GM12878 (cell line): ENCODE measurements at regions of chr15 and their contacts with region 1.

Region 1: GRCh38 chr15:65275728-65276126 is 11.0 kb downstream of the PARP16 start:
- DNase-seq: no peak
- ATAC-seq: no peak
- H3K4me3 ChIP-seq: no peak overlapping the region
- H3K27ac ChIP-seq: no peak overlapping the region
- H3K4me1 ChIP-seq: no peaks in the 10 kb centered on the region
- H3K27me3 ChIP-seq: no peaks in the 10 kb centered on the region
- CTCF ChIP-seq: no peak
- EP300 ChIP-seq: no peak
- POLR2A ChIP-seq: no peak
- RAD21 ChIP-seq: no peak

Region 2: DNA sequence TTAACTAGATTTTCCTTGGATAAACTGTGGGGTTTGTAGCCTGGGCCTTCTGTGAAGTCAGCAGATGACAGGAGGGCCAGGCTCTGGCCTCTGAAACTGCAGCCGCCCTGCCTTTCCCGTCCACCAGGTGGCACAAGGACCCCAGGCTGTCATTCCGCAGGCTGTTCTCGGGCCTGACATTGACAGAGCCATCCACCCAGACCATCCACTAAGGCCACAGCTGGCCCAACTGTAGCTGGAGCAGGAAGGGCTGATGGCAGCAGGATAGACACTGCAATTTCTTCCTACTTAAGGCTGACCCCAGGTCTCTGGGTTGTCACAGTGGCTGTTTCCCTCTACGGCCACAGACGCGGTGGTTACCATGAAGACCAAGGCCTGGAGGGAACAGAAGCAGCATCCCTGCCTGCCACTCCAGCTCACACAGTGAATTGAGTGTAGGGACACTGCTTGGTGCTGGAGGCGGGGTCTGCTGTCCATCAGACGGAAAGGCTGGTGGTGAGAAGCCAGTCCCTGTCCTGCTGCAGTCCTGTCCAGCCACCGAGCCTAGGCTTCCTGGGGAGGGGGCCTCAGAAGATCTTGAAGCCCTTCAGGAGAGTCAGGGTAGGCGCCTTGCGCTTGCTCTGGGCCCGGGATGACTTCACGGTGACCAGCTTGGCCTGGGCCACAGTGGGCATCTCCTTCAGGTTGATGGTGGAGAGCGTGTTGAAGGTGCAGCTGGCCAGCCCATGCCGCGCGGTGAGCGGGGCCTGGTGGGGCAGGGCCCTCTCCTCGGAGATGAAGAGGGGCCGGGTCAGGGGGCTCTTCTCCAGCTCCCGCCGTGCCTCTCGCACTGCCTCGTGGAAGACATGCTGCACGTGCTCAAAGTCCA is 221.2 kb before region 1 on chr15:
- CTCF ChIA-PET with region 1: interaction called, 9 read pairs
- POLR2A ChIA-PET with region 1: no interaction called
- RAD21 ChIA-PET with region 1: interaction called, 4 read pairs
- SMC1A ChIA-PET with region 1: interaction called, 4 read pairs
- in situ Hi-C with region 1: no loop called
- intact Hi-C with region 1: loop called (anchors 1 kb)
- DNase-seq: no peak
- ATAC-seq: peak; percentile 82
- H3K4me3 ChIP-seq: no peak overlapping the region
- H3K27ac ChIP-seq: no peak overlapping the region
- H3K4me1 ChIP-seq: peaks cover 6% of the 10 kb centered on the region
- H3K27me3 ChIP-seq: no peaks in the 10 kb centered on the region
- CTCF ChIP-seq: peak; percentile 89 to 93 (median 89)
- EP300 ChIP-seq: no peak
- POLR2A ChIP-seq: no peak
- RAD21 ChIP-seq: peak; percentile 84

Region 3: GRCh38 chr15:65184868-65185738 is 90.6 kb before region 1 on chr15 and contains the start of gene CLPX:
- CTCF ChIA-PET with region 1: interaction called, 11 read pairs
- POLR2A ChIA-PET with region 1: interaction called, 3 read pairs
- RAD21 ChIA-PET with region 1: interaction called, 4 read pairs
- SMC1A ChIA-PET with region 1: interaction called, 4 read pairs
- in situ Hi-C with region 1: no loop called
- intact Hi-C with region 1: loop called (anchors 1 kb)
- DNase-seq: peak; percentile 90
- ATAC-seq: peak; percentile 88
- H3K4me3 ChIP-seq: peak within 1 kb of the TSS; percentile 94
- H3K27ac ChIP-seq: peak within 1 kb of the TSS; percentile 89
- H3K4me1 ChIP-seq: peaks cover 3% of the 10 kb centered on the region; the same call in 1 of the 2 replicates
- H3K27me3 ChIP-seq: no peaks in the 10 kb centered on the region
- CTCF ChIP-seq: no peak
- EP300 ChIP-seq: no peak
- POLR2A ChIP-seq: peak; percentile 92
- RAD21 ChIP-seq: no peak
- polyA plus RNA-seq, gene CLPX: 10.1 to 12.5 TPM

Region 4: GRCh38 chr15:65194826-65195547 is 80.7 kb before region 1 on chr15:
- CTCF ChIA-PET with region 1: interaction called, 12 read pairs
- POLR2A ChIA-PET with region 1: no interaction called
- RAD21 ChIA-PET with region 1: interaction called, 3 read pairs
- SMC1A ChIA-PET with region 1: no interaction called
- in situ Hi-C with region 1: no loop called
- intact Hi-C with region 1: no loop called
- DNase-seq: no peak
- ATAC-seq: no peak
- H3K4me3 ChIP-seq: no peak overlapping the region
- H3K27ac ChIP-seq: no peak overlapping the region
- H3K4me1 ChIP-seq: no peaks in the 10 kb centered on the region
- H3K27me3 ChIP-seq: no peaks in the 10 kb centered on the region
- CTCF ChIP-seq: no peak
- EP300 ChIP-seq: no peak
- POLR2A ChIP-seq: no peak
- RAD21 ChIP-seq: no peak

Region 5: DNA sequence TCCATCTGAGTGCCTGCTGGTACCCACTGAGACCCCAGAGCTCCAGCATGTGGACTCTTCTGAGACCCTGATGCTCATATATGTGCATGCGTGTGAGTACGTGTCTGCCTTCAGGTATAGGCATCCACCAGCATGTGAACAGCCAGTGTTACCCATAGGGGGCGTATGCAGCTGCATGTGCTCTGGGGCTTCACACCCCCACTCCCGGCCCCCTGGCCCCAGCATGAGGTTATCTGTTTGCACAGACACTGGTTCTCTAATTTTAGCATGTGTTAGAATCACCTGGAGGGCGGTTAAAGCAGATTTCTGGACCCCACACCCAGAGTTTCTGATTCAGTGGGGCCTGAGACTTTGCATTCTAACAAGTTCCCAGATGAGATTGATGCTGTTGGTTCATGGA is 63.6 kb before region 1 on chr15:
- CTCF ChIA-PET with region 1: interaction called, 17 read pairs
- POLR2A ChIA-PET with region 1: no interaction called
- RAD21 ChIA-PET with region 1: no interaction called
- SMC1A ChIA-PET with region 1: no interaction called
- in situ Hi-C with region 1: no loop called
- intact Hi-C with region 1: no loop called
- DNase-seq: no peak
- ATAC-seq: peak; percentile 92
- H3K4me3 ChIP-seq: no peak overlapping the region
- H3K27ac ChIP-seq: no peak overlapping the region
- H3K4me1 ChIP-seq: no peaks in the 10 kb centered on the region
- H3K27me3 ChIP-seq: no peaks in the 10 kb centered on the region
- CTCF ChIP-seq: peak; percentile 45 to 74 (median 71)
- EP300 ChIP-seq: no peak
- POLR2A ChIP-seq: no peak
- RAD21 ChIP-seq: peak; percentile 55

Region 6: DNA sequence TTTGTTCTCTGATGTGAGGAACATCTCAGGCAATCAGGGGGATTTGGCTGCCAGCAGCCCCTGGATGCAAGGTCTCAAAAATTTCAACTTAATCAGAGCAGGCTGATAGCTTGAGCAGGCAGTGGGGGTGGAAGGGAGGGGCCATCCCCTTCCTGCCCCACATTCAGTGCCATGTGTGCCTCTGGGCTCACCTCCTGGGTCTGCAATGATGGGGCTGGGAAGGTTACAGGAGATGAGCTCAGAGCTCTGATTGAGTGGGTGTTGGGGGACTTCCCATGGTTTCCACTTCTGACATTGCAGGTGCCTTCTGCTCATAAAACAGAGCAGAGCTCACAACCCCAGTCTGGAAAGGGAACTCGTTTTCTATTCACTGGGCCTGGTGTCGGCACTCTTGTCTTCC is 26.1 kb before region 1 on chr15:
- CTCF ChIA-PET with region 1: interaction called, 10 read pairs
- POLR2A ChIA-PET with region 1: no interaction called
- RAD21 ChIA-PET with region 1: no interaction called
- SMC1A ChIA-PET with region 1: interaction called, 4 read pairs
- in situ Hi-C with region 1: no loop called
- intact Hi-C with region 1: no loop called
- DNase-seq: peak; percentile 38
- ATAC-seq: peak; percentile 95
- H3K4me3 ChIP-seq: no peak overlapping the region
- H3K27ac ChIP-seq: peak overlapping the region; percentile 33; the same call in 1 of the 2 replicates
- H3K4me1 ChIP-seq: peaks cover 11% of the 10 kb centered on the region
- H3K27me3 ChIP-seq: no peaks in the 10 kb centered on the region
- CTCF ChIP-seq: no peak
- EP300 ChIP-seq: no peak
- POLR2A ChIP-seq: 0 out of 2 replicates have a peak, but pooled peaks have one; percentile 21
- RAD21 ChIP-seq: no peak

Region 7: GRCh38 chr15:65286704-65287519 is 11.2 kb after region 1 on chr15 and contains the start of gene PARP16:
- CTCF ChIA-PET with region 1: interaction called, 21 read pairs
- POLR2A ChIA-PET with region 1: interaction called, 8 read pairs
- RAD21 ChIA-PET with region 1: interaction called, 5 read pairs
- SMC1A ChIA-PET with region 1: interaction called, 7 read pairs
- in situ Hi-C with region 1: no loop called
- intact Hi-C with region 1: no loop called
- DNase-seq: peak; percentile 77
- ATAC-seq: peak; percentile 97
- H3K4me3 ChIP-seq: peak within 1 kb of the TSS; percentile 74
- H3K27ac ChIP-seq: peak within 1 kb of the TSS; percentile 74
- H3K4me1 ChIP-seq: peaks cover 11% of the 10 kb centered on the region
- H3K27me3 ChIP-seq: no peaks in the 10 kb centered on the region
- CTCF ChIP-seq: peak in 1 of 3 experiments; percentile 51; a peak in 2 of 6 replicates
- EP300 ChIP-seq: no peak
- POLR2A ChIP-seq: peak; percentile 87
- RAD21 ChIP-seq: no peak
- polyA plus RNA-seq, gene PARP16: 4.9 to 7.6 TPM